PC-3 (cell line): ENCODE measurements at regions of chr22 and their contacts with region 1.

Region 1: GRCh38 chr22:24525416-24526037 is 29.4 kb downstream of the GUCD1 start:
- DNase-seq: peak; percentile 62
- ATAC-seq: peak; percentile 68
- H3K4me3 ChIP-seq: no peak overlapping the region
- H3K27ac ChIP-seq: no peak overlapping the region
- H3K4me1 ChIP-seq: no peaks in the 10 kb centered on the region
- H3K27me3 ChIP-seq: no peaks in the 10 kb centered on the region
- CTCF ChIP-seq: peak; percentile 86

Region 2: DNA sequence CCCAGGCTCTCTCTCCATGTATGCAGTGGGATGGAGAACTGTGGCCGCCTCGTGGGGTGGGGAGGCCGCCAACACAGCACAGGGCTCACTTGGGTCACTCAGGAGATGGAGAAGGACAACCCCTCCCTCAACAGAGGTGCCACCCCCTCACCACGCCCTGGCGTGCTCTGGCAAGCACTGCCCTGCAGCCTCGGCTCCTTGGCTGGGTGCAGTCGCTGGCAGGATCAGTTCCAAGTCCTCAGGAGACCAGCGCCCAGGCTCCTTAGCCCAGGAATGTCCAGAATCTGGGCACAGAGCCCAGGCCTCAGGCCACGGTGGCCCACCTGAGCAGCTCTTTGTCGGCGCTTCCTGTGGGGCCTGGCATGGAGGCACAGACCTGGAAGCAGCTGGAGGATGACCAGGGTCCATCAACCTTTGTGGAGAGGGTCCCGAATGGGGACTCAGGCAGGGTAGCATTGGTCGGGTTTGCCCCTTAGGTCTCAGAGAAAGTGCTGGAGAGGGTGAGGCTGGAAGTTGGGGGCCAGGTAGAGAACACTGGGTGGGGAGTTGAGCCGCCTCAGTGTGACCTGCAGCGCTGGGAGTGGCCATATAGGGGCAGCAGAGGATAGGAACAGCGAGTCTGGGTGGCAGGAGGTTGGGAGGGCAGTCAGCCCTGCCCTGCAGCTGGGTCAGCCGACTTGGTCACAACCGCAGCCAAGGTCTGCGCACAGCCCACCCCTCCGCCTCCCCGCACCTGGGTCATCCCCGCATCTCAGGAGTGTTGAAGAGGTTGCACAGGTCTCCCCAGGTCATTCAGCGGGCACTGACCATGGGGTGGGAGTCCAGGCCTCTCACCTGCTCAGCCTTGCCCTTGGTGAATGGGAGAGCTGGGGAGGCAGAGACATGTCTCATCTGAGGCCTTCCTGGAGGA is 336.0 kb before region 1 on chr22:
- CTCF ChIA-PET with region 1: interaction called, 10 read pairs
- POLR2A ChIA-PET with region 1: no interaction called
- intact Hi-C with region 1: no loop called
- DNase-seq: peak; percentile 69
- ATAC-seq: peak; percentile 91
- H3K4me3 ChIP-seq: no peak overlapping the region
- H3K27ac ChIP-seq: no peak overlapping the region
- H3K4me1 ChIP-seq: peaks cover 9% of the 10 kb centered on the region
- H3K27me3 ChIP-seq: no peaks in the 10 kb centered on the region
- CTCF ChIP-seq: peak; percentile 85

Region 3: DNA sequence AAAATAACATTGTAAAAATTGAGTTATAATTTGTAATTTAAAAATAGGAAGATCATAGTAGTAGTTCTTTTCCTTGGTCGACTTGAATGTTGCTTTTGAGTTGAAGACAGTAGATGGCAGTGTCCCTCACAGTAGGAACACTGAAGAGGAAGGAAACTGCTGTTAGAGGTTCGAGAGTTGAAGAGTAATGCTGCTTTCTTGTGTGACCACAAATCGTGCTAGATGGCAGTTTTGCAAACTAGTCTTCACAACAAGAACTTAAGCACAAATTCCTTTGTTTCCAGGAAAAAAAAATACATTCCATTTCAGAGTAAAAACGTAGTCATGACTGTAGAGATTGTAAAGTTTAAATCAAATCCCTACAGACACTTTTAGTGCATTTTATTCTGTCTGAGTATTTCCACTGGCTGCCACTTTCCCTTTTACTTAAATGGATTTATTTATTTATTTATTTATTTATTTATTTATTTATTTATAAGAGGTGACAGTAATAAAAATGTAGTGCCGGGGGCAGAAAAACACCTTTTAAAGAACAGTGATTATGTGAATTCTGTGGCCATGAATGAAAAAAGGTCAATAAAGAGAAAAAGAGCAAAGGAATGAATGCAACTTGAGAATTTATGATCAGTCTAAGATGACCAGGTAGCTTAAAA is 200.3 kb before region 1 on chr22:
- CTCF ChIA-PET with region 1: no interaction called
- POLR2A ChIA-PET with region 1: no interaction called
- intact Hi-C with region 1: loop called (anchors 1 kb)
- DNase-seq: peak; percentile 47
- ATAC-seq: peak; percentile 64
- H3K4me3 ChIP-seq: no peak overlapping the region
- H3K27ac ChIP-seq: no peak overlapping the region
- H3K4me1 ChIP-seq: 0 out of 2 replicates have a peak, but pooled peaks cover 9% of the 10 kb centered on the region
- H3K27me3 ChIP-seq: no peaks in the 10 kb centered on the region
- CTCF ChIP-seq: peak; percentile 59

Region 4: GRCh38 chr22:24423519-24424000 is 102.0 kb before region 1 on chr22:
- CTCF ChIA-PET with region 1: interaction called, 3 read pairs
- POLR2A ChIA-PET with region 1: no interaction called
- intact Hi-C with region 1: loop called (anchors 2 kb)
- DNase-seq: peak; percentile 34
- ATAC-seq: peak; percentile 67
- H3K4me3 ChIP-seq: peak overlapping the region; percentile 61
- H3K27ac ChIP-seq: no peak overlapping the region
- H3K4me1 ChIP-seq: no peaks in the 10 kb centered on the region
- H3K27me3 ChIP-seq: no peaks in the 10 kb centered on the region
- CTCF ChIP-seq: peak; percentile 63

Region 5: GRCh38 chr22:24450610-24451009 is 74.9 kb before region 1 on chr22:
- CTCF ChIA-PET with region 1: no interaction called
- POLR2A ChIA-PET with region 1: no interaction called
- intact Hi-C with region 1: no loop called
- DNase-seq: no peak
- ATAC-seq: no peak
- H3K4me3 ChIP-seq: no peak overlapping the region
- H3K27ac ChIP-seq: no peak overlapping the region
- H3K4me1 ChIP-seq: no peaks in the 10 kb centered on the region
- H3K27me3 ChIP-seq: no peaks in the 10 kb centered on the region
- CTCF ChIP-seq: no peak

Region 6: DNA sequence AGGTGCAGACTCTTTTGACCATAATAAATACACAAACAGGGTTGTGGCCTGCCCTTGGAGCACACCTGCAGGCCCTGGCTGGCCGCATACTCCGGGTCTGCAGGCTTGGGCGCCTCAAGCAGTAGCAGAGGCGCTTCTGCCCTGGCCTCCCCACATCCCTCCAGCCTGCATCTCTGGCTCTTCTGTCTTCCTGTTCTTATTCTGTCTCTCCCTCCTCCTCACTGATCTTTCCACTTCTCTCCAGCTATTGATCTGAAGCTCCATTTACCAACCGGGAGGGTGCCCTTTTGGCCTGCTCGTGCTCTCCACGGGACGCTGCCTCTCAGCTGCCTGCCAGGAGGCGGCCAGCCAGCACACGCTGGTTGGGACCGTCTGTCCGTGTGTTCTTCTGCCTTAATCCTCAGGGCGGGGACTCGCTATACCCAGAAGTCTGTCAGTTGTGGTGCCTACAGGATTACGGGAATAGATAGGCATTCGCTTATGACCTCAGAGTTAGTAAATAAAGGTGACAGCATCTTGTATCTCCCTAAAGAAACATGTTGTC is 25.2 kb before region 1 on chr22:
- CTCF ChIA-PET with region 1: no interaction called
- POLR2A ChIA-PET with region 1: no interaction called
- intact Hi-C with region 1: no loop called
- DNase-seq: no peak
- ATAC-seq: no peak
- H3K4me3 ChIP-seq: no peak overlapping the region
- H3K27ac ChIP-seq: no peak overlapping the region
- H3K4me1 ChIP-seq: no peaks in the 10 kb centered on the region
- H3K27me3 ChIP-seq: no peaks in the 10 kb centered on the region
- CTCF ChIP-seq: no peak

Region 7: GRCh38 chr22:24514241-24515026 is 11.1 kb before region 1 on chr22:
- CTCF ChIA-PET with region 1: no interaction called
- POLR2A ChIA-PET with region 1: no interaction called
- intact Hi-C with region 1: no loop called
- DNase-seq: no peak
- ATAC-seq: no peak
- H3K4me3 ChIP-seq: no peak overlapping the region
- H3K27ac ChIP-seq: no peak overlapping the region
- H3K4me1 ChIP-seq: no peaks in the 10 kb centered on the region
- H3K27me3 ChIP-seq: no peaks in the 10 kb centered on the region
- CTCF ChIP-seq: no peak